CD14-positive monocyte (primary cell): ENCODE measurements at regions of chr20 and their contacts with region 1.

Region 1: DNA sequence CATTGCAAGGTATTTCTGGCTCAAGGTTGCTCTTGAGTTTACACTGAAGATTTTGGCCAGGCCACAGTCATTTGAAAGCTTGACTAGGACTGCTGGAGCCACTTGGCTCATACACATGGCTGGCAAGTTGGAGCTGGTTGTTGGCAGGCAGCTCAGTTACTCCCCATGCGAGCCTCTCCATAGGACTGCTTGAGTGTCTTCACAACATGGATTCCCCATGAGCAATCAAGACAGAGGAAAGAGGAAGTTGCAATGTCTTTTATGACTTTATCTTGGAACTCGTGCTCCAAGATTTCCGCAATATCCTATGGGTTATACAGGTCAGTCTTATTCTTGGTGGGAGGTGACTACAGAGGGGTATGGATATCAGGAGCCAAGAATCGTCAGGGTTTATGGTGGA is 1.4 kb upstream of the MANBAL start:
- DNase-seq: peak; percentile 76 to 92 (median 87)
- H3K4me3 ChIP-seq: no peak overlapping the region
- H3K4me3 Mint-ChIP-seq: no peak overlapping the region
- H3K27ac ChIP-seq: peak overlapping the region; percentile 30 to 99
- H3K27ac Mint-ChIP-seq: peak overlapping the region; percentile 96 to 98 (median 97)
- H3K4me1 ChIP-seq: peaks cover 35 to 49% of the 10 kb centered on the region in 2 donors
- H3K4me1 Mint-ChIP-seq: peaks cover 49% of the 10 kb centered on the region
- H3K27me3 ChIP-seq: no peaks in the 10 kb centered on the region
- H3K27me3 Mint-ChIP-seq: peaks cover 0 to 7% (median 3%) of the 10 kb centered on the region in 3 donors
- CTCF ChIP-seq: no peak

Region 2: DNA sequence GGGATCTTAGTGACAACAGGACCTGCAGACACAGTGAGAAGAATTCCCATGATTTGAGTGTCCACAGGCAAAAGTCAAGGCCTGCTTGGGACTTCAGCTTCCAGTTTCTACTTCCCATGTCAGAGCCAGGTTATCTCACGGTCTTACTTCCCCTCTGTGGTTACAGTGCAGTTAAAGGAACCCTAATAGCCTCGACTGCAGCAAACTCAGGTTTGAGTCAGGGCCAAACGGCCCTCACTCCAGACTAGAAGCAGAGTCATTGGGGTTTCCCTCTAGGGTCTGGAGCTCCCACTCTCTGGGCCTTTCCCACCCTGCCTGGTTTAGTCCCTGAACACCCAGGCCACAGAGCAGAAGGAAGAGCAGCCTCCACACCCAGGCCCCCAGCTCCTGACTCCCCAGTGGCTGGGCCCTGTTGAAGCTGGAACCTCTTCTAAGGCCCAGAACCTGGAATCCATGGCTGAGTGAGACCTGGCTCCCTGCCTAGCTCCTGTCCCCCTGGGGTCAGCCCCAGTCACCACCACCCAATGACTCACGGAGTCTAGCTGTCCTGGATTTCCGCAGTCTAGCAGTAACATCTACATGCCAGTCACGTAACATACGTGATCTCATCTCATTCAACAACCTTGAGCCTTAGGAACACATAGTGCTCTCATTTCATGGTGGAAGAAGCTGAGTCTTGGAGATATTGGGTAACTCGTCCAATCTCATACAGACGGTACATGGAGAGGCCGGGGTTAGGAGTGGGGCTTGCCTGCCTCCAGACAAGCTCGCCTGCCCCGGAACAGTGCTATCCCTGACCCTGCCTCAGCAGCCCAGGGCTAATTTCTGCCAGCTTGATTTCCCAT is 17.3 kb before region 1 on chr20:
- intact Hi-C with region 1: loop called (anchors 2 kb)
- DNase-seq: peak; percentile 96 to 99 (median 98)
- H3K4me3 ChIP-seq: peak overlapping the region in 1 of 3 experiments; percentile 4
- H3K4me3 Mint-ChIP-seq: peak overlapping the region; percentile 9 to 48
- H3K27ac ChIP-seq: peak overlapping the region; percentile 97 to 100
- H3K27ac Mint-ChIP-seq: peak overlapping the region; percentile 96 to 100 (median 99)
- H3K4me1 ChIP-seq: peaks cover 66% of the 10 kb centered on the region in 2 donors
- H3K4me1 Mint-ChIP-seq: peaks cover 65% of the 10 kb centered on the region
- H3K27me3 ChIP-seq: no peaks in the 10 kb centered on the region
- H3K27me3 Mint-ChIP-seq: peaks cover 0 to 1% (median 0%) of the 10 kb centered on the region in 3 donors
- CTCF ChIP-seq: no peak

Region 3: GRCh38 chr20:37345339-37346230 is 57.5 kb after region 1 on chr20 and contains the start of gene SRC:
- intact Hi-C with region 1: no loop called
- DNase-seq: peak; percentile 59 to 72 (median 64)
- H3K4me3 ChIP-seq: peak within 1 kb of the TSS; percentile 48 to 69 (median 57)
- H3K4me3 Mint-ChIP-seq: peak within 1 kb of the TSS; percentile 76 to 80
- H3K27ac ChIP-seq: peak within 1 kb of the TSS in 1 of 2 donors; percentile 69
- H3K27ac Mint-ChIP-seq: peak within 1 kb of the TSS; percentile 40 to 90 (median 79)
- H3K4me1 ChIP-seq: peaks cover 47 to 63% of the 10 kb centered on the region in 2 donors
- H3K4me1 Mint-ChIP-seq: peaks cover 52% of the 10 kb centered on the region
- H3K27me3 ChIP-seq: peaks cover 0 to 9% of the 10 kb centered on the region in 2 donors
- H3K27me3 Mint-ChIP-seq: peaks cover 6 to 23% (median 18%) of the 10 kb centered on the region in 3 donors
- CTCF ChIP-seq: no peak
- polyA plus RNA-seq, gene SRC: 4.9 to 55.1 (median 6.8) TPM

Region 4: GRCh38 chr20:37579106-37579505 is 291.0 kb after region 1 on chr20:
- intact Hi-C with region 1: no loop called
- DNase-seq: no peak
- H3K4me3 ChIP-seq: no peak overlapping the region
- H3K4me3 Mint-ChIP-seq: no peak overlapping the region
- H3K27ac ChIP-seq: no peak overlapping the region
- H3K27ac Mint-ChIP-seq: no peak overlapping the region
- H3K4me1 ChIP-seq: no peaks in the 10 kb centered on the region
- H3K4me1 Mint-ChIP-seq: peaks cover 9% of the 10 kb centered on the region
- H3K27me3 ChIP-seq: no peaks in the 10 kb centered on the region
- H3K27me3 Mint-ChIP-seq: peaks cover 8 to 16% (median 16%) of the 10 kb centered on the region in 3 donors
- CTCF ChIP-seq: no peak